Heart right ventricle (tissue), 16 donors: ENCODE measurements at regions of chr7 and their contacts with region 1.

Region 1: DNA sequence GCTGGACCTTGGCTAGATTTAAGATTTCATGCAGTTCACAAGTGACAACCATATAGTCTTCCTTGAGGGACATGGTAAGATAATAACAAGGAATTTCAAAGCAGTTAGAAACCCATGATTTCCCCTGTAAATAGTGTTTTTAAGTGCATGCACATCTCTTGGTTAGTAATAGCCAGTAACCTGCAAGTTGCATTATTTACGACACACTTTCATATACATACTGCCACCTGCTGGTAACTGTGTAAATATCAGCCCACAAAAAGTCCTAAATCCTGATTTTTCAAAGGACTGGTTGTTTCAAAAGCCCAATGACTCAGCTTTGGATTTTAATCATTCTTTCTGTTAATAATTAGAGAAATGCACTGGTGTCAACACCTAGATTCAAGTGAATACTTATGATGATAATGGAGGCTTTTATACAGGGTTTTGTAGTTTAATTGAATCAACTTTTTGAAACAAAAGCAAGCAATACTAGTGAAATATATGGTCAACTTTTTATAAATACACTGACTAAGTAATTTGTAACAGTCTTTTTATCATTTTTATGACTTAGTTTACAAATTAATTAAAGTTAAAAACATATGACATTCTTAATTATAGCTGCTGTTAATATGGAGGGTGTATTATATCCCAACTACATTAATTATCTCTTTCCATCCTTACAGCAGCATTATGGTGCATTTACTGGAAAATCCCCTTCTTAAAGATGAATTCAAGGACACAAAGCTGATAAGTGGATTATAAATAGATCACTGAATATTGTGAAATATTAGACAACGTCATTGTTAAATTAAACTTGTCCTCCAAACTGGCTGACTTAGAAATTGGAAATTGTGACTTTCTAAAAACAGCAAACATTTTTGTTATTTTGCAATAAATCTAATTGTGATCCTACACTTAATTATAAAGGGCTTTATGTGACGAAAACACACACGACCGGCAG is 367.7 kb upstream of the SEMA3D start:
- DNase-seq: peak in 1 of 2 donors; percentile 5
- ATAC-seq: peak in 1 of 8 donors; percentile 34
- H3K4me3 ChIP-seq: no peak overlapping the region
- H3K27ac ChIP-seq: no peak overlapping the region
- H3K4me1 ChIP-seq: peaks cover 0 to 5% (median 0%) of the 10 kb centered on the region in 9 donors
- H3K27me3 ChIP-seq: no peaks in the 10 kb centered on the region
- CTCF ChIP-seq: peak; percentile 25 to 78 (median 66)

Region 2: DNA sequence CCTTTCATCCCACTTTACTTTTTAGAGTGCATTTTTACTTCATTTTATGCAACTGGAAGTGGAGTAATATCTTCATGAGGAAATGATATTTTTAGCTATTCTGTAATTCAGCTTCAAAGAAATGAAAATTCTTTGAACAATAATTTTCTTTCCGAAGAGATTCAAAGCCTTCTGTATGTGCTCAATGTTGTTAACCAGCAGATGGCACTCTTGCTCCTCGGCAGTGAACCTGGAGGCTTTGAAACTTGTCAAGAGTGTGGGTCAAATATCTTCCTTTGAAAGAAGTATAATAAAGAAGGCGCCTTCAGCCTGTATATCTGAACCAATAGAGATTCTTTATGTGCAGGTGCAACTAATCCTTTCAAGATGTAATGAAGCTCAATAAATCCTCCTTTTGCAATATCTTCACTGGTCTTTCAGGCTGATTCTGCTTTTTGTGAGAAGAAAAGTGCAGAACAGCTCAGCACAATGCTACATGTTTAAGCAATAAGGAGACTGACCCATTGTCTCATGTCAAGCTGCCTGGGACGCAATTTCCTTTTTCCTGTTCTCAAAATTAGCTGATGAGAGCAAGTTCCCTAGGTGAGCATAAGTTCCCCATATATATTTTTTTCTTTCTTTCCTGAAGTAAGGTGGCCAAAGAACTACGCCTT is 1618.3 kb before region 1 on chr7:
- intact Hi-C with region 1: loop called in 1 of 10 experiments (anchors 10 kb)
- DNase-seq: peak in 1 of 2 donors; percentile 39
- ATAC-seq: peak in 4 of 8 donors; percentile 59 to 68 (median 64)
- H3K4me3 ChIP-seq: no peak overlapping the region
- H3K27ac ChIP-seq: peak overlapping the region in 1 of 10 donors; percentile 10
- H3K4me1 ChIP-seq: peaks cover 0 to 8% (median 3%) of the 10 kb centered on the region in 9 donors
- H3K27me3 ChIP-seq: no peaks in the 10 kb centered on the region
- CTCF ChIP-seq: peak; percentile 65 to 92 (median 79)

Region 3: GRCh38 chr7:85612514-85612913 is 58.0 kb after region 1 on chr7:
- intact Hi-C with region 1: no loop called
- DNase-seq: no peak
- ATAC-seq: no peak
- H3K4me3 ChIP-seq: no peak overlapping the region
- H3K27ac ChIP-seq: no peak overlapping the region
- H3K4me1 ChIP-seq: no peaks in the 10 kb centered on the region
- H3K27me3 ChIP-seq: no peaks in the 10 kb centered on the region
- CTCF ChIP-seq: no peak